ENCODE measurements at regions of chr12 and their contacts with region 1.

Region 1: DNA sequence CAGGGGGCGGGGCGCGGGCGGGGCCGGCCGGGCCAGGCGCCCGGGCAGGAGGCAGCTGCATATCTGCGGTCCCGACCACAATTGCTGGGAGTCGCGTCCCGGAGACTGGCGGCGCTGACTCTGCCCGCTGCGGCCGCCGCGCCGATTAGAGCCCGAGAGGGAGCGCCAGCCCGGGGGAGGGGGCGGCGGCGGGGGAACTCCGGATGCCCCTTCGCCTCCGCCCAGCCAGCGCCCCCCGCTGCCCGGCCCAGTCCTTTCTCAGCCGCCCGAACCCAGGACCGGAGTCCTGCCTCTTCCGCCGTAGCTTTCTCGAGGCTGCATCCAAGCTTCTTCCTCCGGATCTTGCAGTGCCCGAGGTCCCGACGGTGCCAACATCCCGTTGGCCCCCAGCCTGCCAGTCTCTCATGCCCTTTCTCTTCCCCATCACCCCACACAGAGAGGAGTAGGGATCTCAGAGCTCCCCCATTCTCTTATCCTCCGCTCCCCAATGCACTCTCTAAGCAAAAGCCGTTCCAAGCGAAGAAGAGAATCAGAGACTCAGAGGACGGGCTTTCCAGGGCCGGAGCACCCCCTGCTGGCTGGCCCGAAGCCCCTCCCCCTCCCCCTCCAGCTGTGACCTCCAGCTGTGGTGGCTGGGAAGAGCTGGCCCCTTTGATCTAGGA is 8.8 kb upstream of the SP7 start:
- DNase-seq: peak; percentile 42 to 68 (median 63)
- ATAC-seq: peak; percentile 89
- H3K4me3 ChIP-seq: peak overlapping the region; percentile 79
- H3K4me3 Mint-ChIP-seq: peak overlapping the region; percentile 91 to 100 (median 97)
- H3K27ac ChIP-seq: peak overlapping the region; percentile 66
- H3K27ac Mint-ChIP-seq: peak overlapping the region; percentile 87 to 96 (median 91)
- H3K4me1 ChIP-seq: peaks cover 0 to 10% of the 10 kb centered on the region in 2 donors
- H3K4me1 Mint-ChIP-seq: peaks cover 11 to 25% (median 17%) of the 10 kb centered on the region in 7 donors
- H3K27me3 ChIP-seq: no peaks in the 10 kb centered on the region
- H3K27me3 Mint-ChIP-seq: peaks cover 0 to 13% (median 0%) of the 10 kb centered on the region in 5 donors

Region 2: GRCh38 chr12:51779876-51780275 is 1565.1 kb before region 1 on chr12:
- CTCF ChIA-PET with region 1: no interaction called
- POLR2A ChIA-PET with region 1: no interaction called
- intact Hi-C with region 1: no loop called
- DNase-seq: no peak
- ATAC-seq: no peak
- H3K4me3 ChIP-seq: no peak overlapping the region
- H3K4me3 Mint-ChIP-seq: no peak overlapping the region
- H3K27ac ChIP-seq: no peak overlapping the region
- H3K27ac Mint-ChIP-seq: no peak overlapping the region
- H3K4me1 ChIP-seq: no peaks in the 10 kb centered on the region
- H3K4me1 Mint-ChIP-seq: peaks cover 0 to 5% (median 3%) of the 10 kb centered on the region in 7 donors
- H3K27me3 ChIP-seq: no peaks in the 10 kb centered on the region
- H3K27me3 Mint-ChIP-seq: peaks cover 0 to 31% (median 9%) of the 10 kb centered on the region in 5 donors

Region 3: GRCh38 chr12:53287741-53288216 is 57.2 kb before region 1 on chr12:
- CTCF ChIA-PET with region 1: interaction called, 3 read pairs
- POLR2A ChIA-PET with region 1: no interaction called
- intact Hi-C with region 1: loop called in 1 of 2 experiments (anchors 1 kb)
- DNase-seq: peak; percentile 43 to 76 (median 69)
- ATAC-seq: peak; percentile 94
- H3K4me3 ChIP-seq: no peak overlapping the region
- H3K4me3 Mint-ChIP-seq: no peak overlapping the region
- H3K27ac ChIP-seq: no peak overlapping the region
- H3K27ac Mint-ChIP-seq: peak overlapping the region in 4 of 9 donors; percentile 8 to 86 (median 25)
- H3K4me1 ChIP-seq: no peaks in the 10 kb centered on the region
- H3K4me1 Mint-ChIP-seq: peaks cover 4 to 11% (median 5%) of the 10 kb centered on the region in 7 donors
- H3K27me3 ChIP-seq: no peaks in the 10 kb centered on the region
- H3K27me3 Mint-ChIP-seq: no peaks in the 10 kb centered on the region

Region 4: GRCh38 chr12:53418221-53418620 is 73.3 kb after region 1 on chr12:
- CTCF ChIA-PET with region 1: interaction called, 6 read pairs
- POLR2A ChIA-PET with region 1: interaction called, 5 read pairs
- intact Hi-C with region 1: loop called in 1 of 2 experiments (anchors 2 kb)
- DNase-seq: no peak
- ATAC-seq: no peak
- H3K4me3 ChIP-seq: no peak overlapping the region
- H3K4me3 Mint-ChIP-seq: peak overlapping the region in 2 of 10 donors; percentile 14 to 55
- H3K27ac ChIP-seq: no peak overlapping the region
- H3K27ac Mint-ChIP-seq: peak overlapping the region in 6 of 9 donors; percentile 23 to 72 (median 30)
- H3K4me1 ChIP-seq: peaks cover 4 to 7% of the 10 kb centered on the region in 2 donors
- H3K4me1 Mint-ChIP-seq: peaks cover 16 to 64% (median 54%) of the 10 kb centered on the region in 7 donors
- H3K27me3 ChIP-seq: no peaks in the 10 kb centered on the region
- H3K27me3 Mint-ChIP-seq: no peaks in the 10 kb centered on the region

Measured in naive thymus-derived CD4-positive, alpha-beta T cell (primary cell).